ENCODE measurements at regions of chr20 and their contacts with region 1.

Region 1: DNA sequence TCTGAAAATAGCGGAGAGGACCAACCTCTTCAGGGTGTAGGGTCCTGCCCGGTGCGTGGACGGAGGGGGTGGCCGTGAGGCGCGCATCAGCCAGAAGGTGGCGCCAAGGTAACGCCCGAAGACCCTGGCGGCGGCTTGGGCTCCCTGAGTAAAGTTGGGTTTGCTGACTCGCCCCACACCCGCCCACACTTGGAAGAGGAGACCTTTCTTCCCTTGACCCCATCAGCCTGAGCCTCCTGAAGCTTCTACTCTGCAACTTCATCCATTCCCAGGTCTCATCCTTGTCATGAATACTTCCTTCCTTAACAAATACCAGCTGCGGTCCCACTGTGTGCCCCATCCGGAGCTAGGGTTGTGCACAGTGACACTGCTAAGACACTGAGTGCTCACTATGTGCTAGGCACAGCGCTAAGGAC is 14.6 kb downstream of the CD40 start:
- DNase-seq: peak in 1 of 2 experiments; percentile 93
- H3K4me3 ChIP-seq: no peak overlapping the region
- H3K27ac ChIP-seq: no peak overlapping the region
- H3K4me1 ChIP-seq: peaks cover 0 to 4% (median 4%) of the 10 kb centered on the region in 4 experiments; a peak in 6 of 7 replicates
- H3K27me3 ChIP-seq: peaks cover 0 to 4% (median 2%) of the 10 kb centered on the region in 4 experiments; a peak in 4 of 7 replicates
- CTCF ChIP-seq: peak; percentile 91 to 96 (median 96)
- EP300 ChIP-seq: no peak
- POLR2A ChIP-seq: no peak
- RAD21 ChIP-seq: peak; percentile 97

Region 2: GRCh38 chr20:46145713-46146112 is 13.0 kb after region 1 on chr20:
- CTCF ChIA-PET with region 1: interaction called, 21 read pairs
- POLR2A ChIA-PET with region 1: interaction called, 5 read pairs
- DNase-seq: no peak
- H3K4me3 ChIP-seq: no peak overlapping the region
- H3K27ac ChIP-seq: no peak overlapping the region
- H3K4me1 ChIP-seq: no peaks in the 10 kb centered on the region; a peak in 1 of 7 replicates
- H3K27me3 ChIP-seq: no peaks in the 10 kb centered on the region
- CTCF ChIP-seq: no peak
- EP300 ChIP-seq: no peak
- POLR2A ChIP-seq: no peak
- RAD21 ChIP-seq: no peak

Region 3: GRCh38 chr20:46157625-46158024 is 24.9 kb after region 1 on chr20:
- CTCF ChIA-PET with region 1: interaction called, 21 read pairs
- POLR2A ChIA-PET with region 1: no interaction called
- DNase-seq: no peak
- H3K4me3 ChIP-seq: no peak overlapping the region
- H3K27ac ChIP-seq: no peak overlapping the region
- H3K4me1 ChIP-seq: no peaks in the 10 kb centered on the region
- H3K27me3 ChIP-seq: no peaks in the 10 kb centered on the region
- CTCF ChIP-seq: no peak
- EP300 ChIP-seq: no peak
- POLR2A ChIP-seq: no peak
- RAD21 ChIP-seq: no peak

Region 4: DNA sequence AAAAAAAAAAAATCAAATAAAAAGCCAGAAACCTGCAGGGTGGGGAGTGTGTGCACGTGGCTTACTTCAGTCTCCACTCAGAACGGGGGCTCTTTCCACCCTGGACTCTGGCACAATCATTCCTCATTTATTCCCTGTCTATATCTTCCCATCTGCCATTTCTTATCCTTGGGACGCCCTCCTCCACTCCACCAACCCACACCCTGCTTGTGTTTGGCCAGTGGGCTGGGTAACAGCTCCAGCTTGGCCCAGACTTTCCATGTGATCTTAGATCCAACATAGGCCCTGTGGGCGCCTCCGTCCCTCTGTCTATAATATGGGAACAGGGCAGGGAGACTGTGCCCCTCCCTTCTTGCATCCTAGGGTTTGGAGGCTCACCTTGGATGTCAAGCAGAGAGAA is 53.5 kb after region 1 on chr20:
- CTCF ChIA-PET with region 1: interaction called, 171 read pairs
- POLR2A ChIA-PET with region 1: no interaction called
- DNase-seq: no peak
- H3K4me3 ChIP-seq: no peak overlapping the region
- H3K27ac ChIP-seq: no peak overlapping the region
- H3K4me1 ChIP-seq: no peaks in the 10 kb centered on the region
- H3K27me3 ChIP-seq: no peaks in the 10 kb centered on the region; a peak in 1 of 7 replicates
- CTCF ChIP-seq: no peak
- EP300 ChIP-seq: no peak
- POLR2A ChIP-seq: no peak
- RAD21 ChIP-seq: no peak

Region 5: DNA sequence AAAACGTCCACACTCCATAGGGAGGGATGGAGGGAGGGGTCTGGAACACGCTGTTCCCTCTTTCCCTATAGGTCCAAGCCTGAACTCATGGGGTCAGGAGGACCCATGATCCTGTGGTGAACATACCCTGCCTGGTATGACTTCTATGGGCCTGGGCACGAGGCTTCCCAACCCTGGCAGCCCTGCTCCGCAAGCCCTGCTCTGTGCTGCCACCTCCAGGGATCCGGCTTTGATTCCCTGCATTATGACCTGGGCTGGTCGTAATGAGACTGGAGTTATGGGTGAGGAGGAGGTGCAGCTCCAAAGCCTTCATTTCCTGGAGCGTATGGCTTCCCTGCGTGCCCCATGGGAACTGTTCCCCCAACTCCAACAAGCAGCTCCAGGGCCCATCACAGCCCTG is 120.7 kb after region 1 on chr20:
- CTCF ChIA-PET with region 1: interaction called, 10 read pairs
- POLR2A ChIA-PET with region 1: no interaction called
- DNase-seq: peak in 1 of 2 experiments; percentile 27
- H3K4me3 ChIP-seq: no peak overlapping the region
- H3K27ac ChIP-seq: no peak overlapping the region
- H3K4me1 ChIP-seq: peaks cover 0 to 9% (median 5%) of the 10 kb centered on the region in 4 experiments; a peak in 5 of 7 replicates
- H3K27me3 ChIP-seq: peaks cover 9 to 38% (median 28%) of the 10 kb centered on the region in 4 experiments
- CTCF ChIP-seq: peak; percentile 72 to 77 (median 73)
- EP300 ChIP-seq: no peak
- POLR2A ChIP-seq: no peak
- RAD21 ChIP-seq: peak; percentile 67 to 75

Region 6: DNA sequence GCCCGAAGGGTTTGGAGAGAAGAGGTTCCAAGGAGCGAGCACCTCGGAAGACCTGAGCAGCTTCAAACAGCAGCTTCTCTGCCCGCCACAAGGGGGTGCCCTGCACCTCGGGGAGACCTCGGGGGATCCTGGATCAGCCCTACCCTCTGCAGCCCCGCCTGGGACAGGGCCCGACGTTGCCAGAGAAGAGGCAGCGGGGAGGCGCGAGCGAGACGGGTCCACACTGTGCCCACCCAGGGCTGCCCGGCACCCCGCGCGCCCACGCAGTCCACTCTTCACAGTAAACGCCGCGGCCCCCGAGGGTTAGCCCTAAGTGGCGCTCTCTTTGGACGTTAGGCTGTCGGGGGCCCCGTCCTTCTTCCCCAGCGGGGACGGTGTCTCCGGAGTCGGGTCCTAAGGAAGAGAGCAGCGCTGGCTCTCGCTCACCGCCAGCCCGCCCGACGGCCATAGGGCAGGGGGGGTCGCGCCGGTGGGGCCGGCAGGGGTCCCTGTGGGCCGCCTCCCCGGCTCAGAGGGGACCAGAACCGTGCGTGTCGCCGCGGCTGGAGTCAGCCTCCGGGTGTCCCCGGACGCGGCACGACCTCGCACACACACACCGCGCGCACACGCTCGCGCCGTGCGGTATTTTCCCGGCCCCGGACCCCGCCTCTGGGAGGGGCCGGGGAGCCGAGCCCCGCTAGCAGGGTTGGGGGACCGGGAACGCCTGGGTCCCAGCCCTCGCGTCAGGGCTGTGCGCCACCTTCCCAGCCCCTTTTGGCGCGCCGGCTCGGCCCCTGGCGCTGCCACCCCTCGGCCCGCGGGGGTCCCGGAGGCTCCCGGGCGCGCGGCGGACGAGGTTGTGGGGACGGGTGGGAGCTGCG is 174.7 kb after region 1 on chr20:
- CTCF ChIA-PET with region 1: interaction called, 60 read pairs
- POLR2A ChIA-PET with region 1: interaction called, 4 read pairs
- DNase-seq: peak; percentile 49 to 89
- H3K4me3 ChIP-seq: peak overlapping the region; percentile 48 to 75 (median 55)
- H3K27ac ChIP-seq: no peak overlapping the region
- H3K4me1 ChIP-seq: peaks cover 0 to 7% (median 5%) of the 10 kb centered on the region in 4 experiments; a peak in 5 of 7 replicates
- H3K27me3 ChIP-seq: peaks cover 44 to 73% (median 67%) of the 10 kb centered on the region in 4 experiments
- CTCF ChIP-seq: peak; percentile 92 to 97 (median 96)
- EP300 ChIP-seq: 0 out of 3 replicates have a peak, but pooled peaks of 1 of the 2 experiments have one; percentile 22
- POLR2A ChIP-seq: no peak
- RAD21 ChIP-seq: peak; percentile 81 to 90

Measured in H1 (cell line).